Activated CD4-positive, alpha-beta memory T cell treated with anti-CD3 and anti-CD28 coated beads for 36 hours (primary cell): ENCODE measurements at regions of chr3 and their contacts with region 1.

Region 1: DNA sequence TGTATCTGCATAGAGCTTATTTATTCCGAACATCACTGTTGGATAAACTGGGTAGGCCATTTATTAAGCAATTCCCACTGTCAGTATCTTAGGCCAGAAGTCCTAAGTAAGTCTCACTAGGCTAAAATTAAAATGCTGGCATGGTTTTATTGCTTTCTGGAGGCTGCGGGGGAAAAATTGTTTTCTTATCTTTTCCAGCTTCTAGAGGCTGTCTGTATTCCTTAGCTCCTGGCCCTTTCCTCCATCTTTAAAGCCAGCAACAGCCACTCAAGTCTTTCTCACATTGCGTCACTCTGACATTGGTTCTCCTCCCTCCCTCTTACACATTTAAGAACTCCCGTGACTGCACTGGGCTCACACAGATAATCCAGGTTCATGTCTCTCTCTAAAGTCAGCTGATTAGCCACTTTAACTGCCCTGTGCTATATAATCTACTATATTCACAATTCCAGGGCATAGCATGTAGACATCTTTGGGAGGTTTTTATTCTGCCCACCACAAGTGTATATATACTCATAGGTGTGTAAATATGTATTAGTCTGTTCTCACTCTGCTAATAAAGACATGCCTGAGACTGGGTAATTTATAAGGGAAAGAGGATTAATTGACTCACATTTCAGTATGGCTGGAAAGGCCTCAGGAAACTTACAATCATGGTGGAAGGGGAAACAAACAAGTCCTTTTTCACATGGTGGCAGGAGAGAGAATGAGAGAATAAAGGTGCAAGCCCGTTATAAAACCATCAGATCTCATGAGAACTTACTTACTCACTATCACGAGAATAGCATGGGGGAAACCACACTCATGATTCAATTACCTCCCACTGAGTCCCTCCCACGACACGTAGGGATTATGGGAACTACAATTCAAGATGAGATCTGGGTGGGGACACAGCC is 113.5 kb upstream of the SLC7A14 start:
- DNase-seq: no peak
- H3K4me3 Mint-ChIP-seq: no peak overlapping the region
- H3K27ac Mint-ChIP-seq: no peak overlapping the region
- H3K4me1 Mint-ChIP-seq: peaks cover 6% of the 10 kb centered on the region
- H3K27me3 Mint-ChIP-seq: peaks cover under 1% of the 10 kb centered on the region

Region 2: GRCh38 chr3:170745211-170745718 is 45.9 kb after region 1 on chr3:
- CTCF ChIA-PET with region 1: no interaction called
- POLR2A ChIA-PET with region 1: no interaction called
- intact Hi-C with region 1: loop called (anchors 1 kb)
- DNase-seq: no peak
- H3K4me3 Mint-ChIP-seq: no peak overlapping the region
- H3K27ac Mint-ChIP-seq: no peak overlapping the region
- H3K4me1 Mint-ChIP-seq: no peaks in the 10 kb centered on the region
- H3K27me3 Mint-ChIP-seq: peaks cover 6% of the 10 kb centered on the region

Region 3: DNA sequence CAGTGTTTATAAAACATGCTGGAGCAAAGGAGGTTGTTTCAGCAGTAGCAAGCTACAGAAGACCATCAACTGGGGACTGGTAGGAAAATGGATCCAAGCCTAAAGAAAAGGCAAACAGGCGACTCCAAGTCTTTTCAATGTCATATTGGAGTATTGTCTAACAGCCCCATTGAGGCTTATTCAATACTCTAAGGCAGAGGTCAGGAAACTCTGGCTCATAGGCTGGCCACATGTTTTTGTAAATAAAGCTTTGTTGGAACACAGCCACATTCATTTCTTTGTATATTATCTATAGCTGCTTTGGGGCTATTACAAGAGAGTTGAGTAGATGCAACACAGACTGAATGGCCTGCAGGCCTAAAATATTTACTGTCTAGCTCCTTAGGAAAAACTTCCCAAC is 93.1 kb after region 1 on chr3:
- CTCF ChIA-PET with region 1: no interaction called
- POLR2A ChIA-PET with region 1: no interaction called
- intact Hi-C with region 1: no loop called
- DNase-seq: no peak
- H3K4me3 Mint-ChIP-seq: no peak overlapping the region
- H3K27ac Mint-ChIP-seq: no peak overlapping the region
- H3K4me1 Mint-ChIP-seq: no peaks in the 10 kb centered on the region
- H3K27me3 Mint-ChIP-seq: peaks cover 8% of the 10 kb centered on the region